GM10248 (cell line): ENCODE measurements at regions of chr9 and their contacts with region 1.

Region 1: GRCh38 chr9:120534266-120534665 is 45.7 kb downstream of the CDK5RAP2 start:
- DNase-seq: no peak
- CTCF ChIP-seq: no peak

Region 2: DNA sequence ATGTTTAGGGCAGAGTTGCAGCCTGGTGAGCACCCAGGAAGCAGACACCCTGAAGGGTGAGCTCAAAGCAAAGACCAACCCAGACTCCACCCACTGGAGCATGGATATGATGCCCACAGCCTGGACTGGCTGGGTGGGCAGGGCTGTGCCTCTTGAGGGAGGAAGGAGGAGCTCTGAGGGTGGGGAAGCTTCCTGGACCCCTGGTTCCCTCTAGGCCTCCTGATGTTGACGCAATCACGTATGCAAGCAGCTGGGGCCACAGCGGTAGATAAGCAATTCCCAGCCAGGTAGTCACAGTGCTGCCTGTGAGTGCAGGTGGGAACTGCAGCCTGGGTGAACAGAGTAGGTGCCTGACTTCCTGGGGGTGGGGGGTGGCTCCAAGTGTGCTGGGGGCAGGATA is 225.8 kb before region 1 on chr9:
- CTCF ChIA-PET with region 1: no interaction called
- POLR2A ChIA-PET with region 1: no interaction called
- DNase-seq: no peak
- CTCF ChIP-seq: no peak

Region 3: DNA sequence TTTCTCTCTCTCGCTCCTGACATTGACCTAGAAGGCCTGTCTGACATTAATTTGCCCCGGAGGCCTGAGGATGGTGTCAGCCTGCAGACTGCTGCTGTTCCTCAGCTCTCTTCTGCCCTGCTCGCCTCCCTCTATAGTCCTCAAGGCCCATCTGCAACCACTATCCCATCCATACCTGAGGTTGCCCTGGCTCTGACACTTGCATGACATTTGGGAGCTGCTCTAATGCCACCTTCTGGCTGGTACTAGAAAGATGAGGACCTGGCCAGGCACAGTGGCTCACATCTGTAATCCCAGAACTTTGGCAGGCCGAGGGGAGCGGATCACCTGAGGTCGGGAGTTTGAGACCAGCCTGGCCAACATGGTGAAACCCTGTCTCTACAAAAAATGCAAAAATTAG is 1004.0 kb after region 1 on chr9:
- CTCF ChIA-PET with region 1: no interaction called
- POLR2A ChIA-PET with region 1: no interaction called
- DNase-seq: no peak
- CTCF ChIP-seq: peak; percentile 13

Region 4: GRCh38 chr9:121975801-121976277 is 1441.6 kb after region 1 on chr9:
- CTCF ChIA-PET with region 1: no interaction called
- POLR2A ChIA-PET with region 1: interaction called, 13 read pairs
- DNase-seq: no peak
- CTCF ChIP-seq: no peak